ENCODE measurements at regions of chr2 and their contacts with region 1.

Region 1: GRCh38 chr2:136423516-136423996 is 305.6 kb upstream of the CXCR4 start:
- DNase-seq: peak; percentile 10
- H3K4me3 ChIP-seq: peak overlapping the region; percentile 62
- H3K27ac ChIP-seq: no peak overlapping the region
- H3K27me3 ChIP-seq: no peaks in the 10 kb centered on the region
- CTCF ChIP-seq: peak; percentile 85

Region 2: DNA sequence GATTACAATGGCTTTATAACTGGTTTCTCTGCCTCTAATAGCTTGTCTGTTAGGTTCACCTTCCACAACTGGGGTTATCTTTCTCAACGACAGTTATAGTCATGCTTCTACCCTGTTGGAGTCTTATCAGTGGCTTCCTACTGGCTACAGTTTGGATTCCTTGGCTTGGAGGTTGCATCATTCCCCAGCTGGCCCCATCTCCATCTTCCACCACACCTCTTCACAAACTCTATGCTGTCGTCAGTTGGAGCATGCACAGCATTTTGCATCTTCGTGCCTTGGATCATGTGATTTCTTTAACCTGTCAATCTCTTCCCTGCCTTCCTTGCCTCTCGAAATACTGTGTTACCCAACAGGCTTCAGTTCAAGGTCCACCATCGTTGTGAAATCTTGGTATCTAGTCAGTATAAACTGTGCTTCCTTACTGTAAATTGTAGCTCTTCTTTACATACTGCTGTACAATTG is 10.7 kb after region 1 on chr2:
- CTCF ChIA-PET with region 1: interaction called, 15 read pairs
- POLR2A ChIA-PET with region 1: no interaction called
- DNase-seq: no peak
- H3K4me3 ChIP-seq: no peak overlapping the region
- H3K27ac ChIP-seq: no peak overlapping the region
- H3K27me3 ChIP-seq: no peaks in the 10 kb centered on the region
- CTCF ChIP-seq: no peak

Region 3: GRCh38 chr2:136486115-136486514 is 62.6 kb after region 1 on chr2:
- CTCF ChIA-PET with region 1: no interaction called
- POLR2A ChIA-PET with region 1: no interaction called
- DNase-seq: no peak
- H3K4me3 ChIP-seq: no peak overlapping the region
- H3K27ac ChIP-seq: no peak overlapping the region
- H3K27me3 ChIP-seq: no peaks in the 10 kb centered on the region
- CTCF ChIP-seq: no peak

Region 4: GRCh38 chr2:137838255-137839092 is 1414.9 kb after region 1 on chr2:
- CTCF ChIA-PET with region 1: interaction called, 31 read pairs
- POLR2A ChIA-PET with region 1: no interaction called
- DNase-seq: peak; percentile 8
- H3K4me3 ChIP-seq: no peak overlapping the region
- H3K27ac ChIP-seq: no peak overlapping the region
- H3K27me3 ChIP-seq: no peaks in the 10 kb centered on the region
- CTCF ChIP-seq: peak; percentile 62